B cell (primary cell): ENCODE measurements at regions of chr7 and their contacts with region 1.

Region 1: GRCh38 chr7:153301936-153302335 is 542.4 kb downstream of the ACTR3B start:
- DNase-seq: no peak
- ATAC-seq: no peak
- H3K4me3 ChIP-seq: no peak overlapping the region
- H3K4me3 Mint-ChIP-seq: no peak overlapping the region
- H3K27ac ChIP-seq: no peak overlapping the region
- H3K27ac Mint-ChIP-seq: no peak overlapping the region
- H3K4me1 ChIP-seq: no peaks in the 10 kb centered on the region
- H3K4me1 Mint-ChIP-seq: no peaks in the 10 kb centered on the region
- H3K27me3 ChIP-seq: no peaks in the 10 kb centered on the region
- H3K27me3 Mint-ChIP-seq: no peaks in the 10 kb centered on the region
- CTCF ChIP-seq: no peak

Region 2: GRCh38 chr7:152512706-152513105 is 789.2 kb before region 1 on chr7:
- CTCF ChIA-PET with region 1: no interaction called
- POLR2A ChIA-PET with region 1: no interaction called
- intact Hi-C with region 1: no loop called
- DNase-seq: peak; percentile 46
- ATAC-seq: peak; percentile 14
- H3K4me3 ChIP-seq: peak overlapping the region in 2 of 5 experiments; percentile 18 to 35
- H3K4me3 Mint-ChIP-seq: peak overlapping the region; percentile 59
- H3K27ac ChIP-seq: no peak overlapping the region
- H3K27ac Mint-ChIP-seq: no peak overlapping the region
- H3K4me1 ChIP-seq: peaks cover 0 to 10% of the 10 kb centered on the region in 2 donors
- H3K4me1 Mint-ChIP-seq: peaks cover 7% of the 10 kb centered on the region
- H3K27me3 ChIP-seq: no peaks in the 10 kb centered on the region
- H3K27me3 Mint-ChIP-seq: peaks cover 2% of the 10 kb centered on the region
- CTCF ChIP-seq: no peak

Region 3: DNA sequence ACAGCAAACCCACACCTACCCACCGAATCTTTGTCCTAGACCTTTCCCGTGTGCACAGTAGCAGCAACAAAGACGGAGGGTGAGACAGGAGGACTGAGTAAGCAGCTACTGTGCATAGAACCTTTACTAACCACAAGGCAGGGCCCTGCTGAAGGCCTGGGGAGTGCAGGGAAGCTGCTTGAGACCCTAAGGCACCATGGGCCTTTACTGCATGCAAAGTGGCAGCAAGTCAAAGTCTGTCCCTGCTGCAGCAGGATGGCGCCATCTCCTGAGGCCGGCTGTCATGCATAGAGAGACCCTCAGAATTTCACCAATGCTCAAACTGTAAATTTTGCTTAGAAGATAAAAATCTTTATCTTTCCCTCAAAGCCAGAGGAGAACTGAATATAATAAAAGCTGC is 68.2 kb after region 1 on chr7:
- CTCF ChIA-PET with region 1: no interaction called
- POLR2A ChIA-PET with region 1: no interaction called
- intact Hi-C with region 1: loop called (anchors 10 kb)
- DNase-seq: no peak
- ATAC-seq: no peak
- H3K4me3 ChIP-seq: no peak overlapping the region
- H3K4me3 Mint-ChIP-seq: no peak overlapping the region
- H3K27ac ChIP-seq: no peak overlapping the region
- H3K27ac Mint-ChIP-seq: no peak overlapping the region
- H3K4me1 ChIP-seq: no peaks in the 10 kb centered on the region
- H3K4me1 Mint-ChIP-seq: no peaks in the 10 kb centered on the region
- H3K27me3 ChIP-seq: no peaks in the 10 kb centered on the region
- H3K27me3 Mint-ChIP-seq: no peaks in the 10 kb centered on the region
- CTCF ChIP-seq: no peak